Adrenal gland (tissue), 19 donors: ENCODE measurements at regions of chr9 and their contacts with region 1.

Region 1: GRCh38 chr9:130866474-130866965 is 30.1 kb downstream of the QRFP start:
- DNase-seq: peak; percentile 74 to 93 (median 82)
- H3K4me3 ChIP-seq: no peak overlapping the region
- H3K27ac ChIP-seq: no peak overlapping the region
- H3K4me1 ChIP-seq: peaks cover 12 to 22% of the 10 kb centered on the region in 2 donors
- H3K27me3 ChIP-seq: no peaks in the 10 kb centered on the region
- CTCF ChIP-seq: peak; percentile 80 to 95 (median 90)
- POLR2A ChIP-seq: no peak

Region 2: DNA sequence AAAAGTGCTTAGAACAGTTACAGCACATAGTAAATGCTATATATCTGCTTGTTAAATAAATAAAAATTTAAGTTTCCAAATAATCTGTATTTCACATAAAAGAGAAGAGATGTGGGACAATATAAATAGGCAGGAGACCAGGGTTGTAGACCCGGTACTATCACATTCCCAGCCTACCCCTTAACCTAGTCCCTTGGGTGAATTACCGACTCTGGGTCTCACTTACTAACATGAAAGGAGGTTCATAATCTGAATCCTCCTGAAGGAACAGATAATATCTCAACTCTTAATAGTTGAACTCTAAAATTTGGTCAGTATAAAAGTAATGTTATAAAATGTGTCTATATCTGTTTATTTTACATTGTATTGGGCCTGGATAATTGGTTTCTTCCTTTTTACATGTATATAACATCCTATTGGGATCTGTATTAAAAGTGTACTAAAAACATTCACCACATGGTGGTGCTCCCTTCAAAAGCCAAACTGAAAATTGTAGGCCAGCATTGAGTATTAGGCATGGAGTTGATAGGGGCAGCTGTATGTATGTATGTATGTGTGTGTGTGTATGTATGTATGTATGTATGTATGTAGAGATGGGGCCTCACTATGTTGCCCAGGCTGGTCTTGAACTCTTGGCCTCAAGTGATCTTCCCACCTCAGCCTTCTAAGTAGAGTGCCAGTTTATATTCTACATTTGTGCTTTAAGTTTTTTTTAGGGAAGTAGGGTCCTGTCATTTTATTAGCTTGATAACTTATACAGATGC is 95.7 kb before region 1 on chr9:
- intact Hi-C with region 1: loop called (anchors 5 kb)
- DNase-seq: no peak
- H3K4me3 ChIP-seq: no peak overlapping the region
- H3K27ac ChIP-seq: no peak overlapping the region
- H3K4me1 ChIP-seq: peaks cover 3 to 10% of the 10 kb centered on the region in 2 donors
- H3K27me3 ChIP-seq: no peaks in the 10 kb centered on the region
- CTCF ChIP-seq: peak; percentile 40 to 83 (median 69)
- POLR2A ChIP-seq: no peak

Region 3: DNA sequence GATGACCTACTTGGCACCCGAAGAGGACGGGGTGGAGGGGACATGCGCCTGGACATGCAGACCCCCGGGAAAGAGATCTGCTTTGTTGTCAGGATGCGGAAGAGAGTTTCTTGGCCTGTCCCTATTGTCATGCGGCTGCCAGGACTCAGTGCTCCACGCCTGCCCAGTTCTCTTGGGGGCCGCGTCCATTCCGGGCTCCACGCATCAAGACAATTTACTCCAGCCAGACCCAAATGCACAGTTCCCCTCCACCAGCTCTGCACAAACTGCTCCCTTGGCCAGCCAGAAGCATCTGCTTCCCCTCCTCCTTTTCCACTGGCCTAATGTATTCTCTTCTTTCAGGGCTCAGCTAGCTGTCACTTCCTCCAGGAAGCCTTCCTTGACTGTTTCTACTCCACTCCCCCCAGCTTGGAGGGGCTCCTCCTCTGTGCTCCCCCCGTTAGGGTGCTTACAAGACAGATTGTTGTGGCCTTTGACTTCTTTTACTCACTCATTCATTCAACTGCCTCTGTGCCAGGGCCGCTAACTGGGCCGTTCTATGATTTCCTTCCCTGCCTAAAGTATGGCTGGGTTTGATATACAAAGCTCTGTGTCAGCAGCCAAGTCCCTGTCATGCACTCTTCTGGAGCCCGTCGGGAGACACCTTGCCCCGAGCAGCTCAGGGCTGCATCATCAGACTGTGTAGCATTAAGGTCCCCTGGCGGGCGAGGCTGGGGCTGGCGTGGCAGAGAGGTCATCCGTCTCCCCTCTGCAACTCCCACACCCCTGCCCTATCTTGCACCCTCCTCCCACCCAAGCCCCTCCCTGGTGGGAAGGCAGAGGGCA is 65.9 kb after region 1 on chr9:
- intact Hi-C with region 1: loop called in 1 of 2 experiments (anchors 5 kb)
- DNase-seq: peak in 2 of 7 donors; percentile 49 to 58
- H3K4me3 ChIP-seq: no peak overlapping the region
- H3K27ac ChIP-seq: peak overlapping the region in 1 of 5 donors; percentile 49
- H3K4me1 ChIP-seq: peaks cover 36 to 42% of the 10 kb centered on the region in 2 donors
- H3K27me3 ChIP-seq: peaks cover 4% of the 10 kb centered on the region
- CTCF ChIP-seq: peak in 1 of 6 experiments; percentile 11
- POLR2A ChIP-seq: no peak

Region 4: GRCh38 chr9:130940693-130941576 is 74.4 kb after region 1 on chr9:
- intact Hi-C with region 1: loop called (anchors 5 kb)
- DNase-seq: peak; percentile 52 to 83 (median 76)
- H3K4me3 ChIP-seq: no peak overlapping the region
- H3K27ac ChIP-seq: no peak overlapping the region
- H3K4me1 ChIP-seq: peaks cover 20 to 27% of the 10 kb centered on the region in 2 donors
- H3K27me3 ChIP-seq: peaks cover 39% of the 10 kb centered on the region
- CTCF ChIP-seq: peak; percentile 66 to 88 (median 82)
- POLR2A ChIP-seq: no peak

Region 5: DNA sequence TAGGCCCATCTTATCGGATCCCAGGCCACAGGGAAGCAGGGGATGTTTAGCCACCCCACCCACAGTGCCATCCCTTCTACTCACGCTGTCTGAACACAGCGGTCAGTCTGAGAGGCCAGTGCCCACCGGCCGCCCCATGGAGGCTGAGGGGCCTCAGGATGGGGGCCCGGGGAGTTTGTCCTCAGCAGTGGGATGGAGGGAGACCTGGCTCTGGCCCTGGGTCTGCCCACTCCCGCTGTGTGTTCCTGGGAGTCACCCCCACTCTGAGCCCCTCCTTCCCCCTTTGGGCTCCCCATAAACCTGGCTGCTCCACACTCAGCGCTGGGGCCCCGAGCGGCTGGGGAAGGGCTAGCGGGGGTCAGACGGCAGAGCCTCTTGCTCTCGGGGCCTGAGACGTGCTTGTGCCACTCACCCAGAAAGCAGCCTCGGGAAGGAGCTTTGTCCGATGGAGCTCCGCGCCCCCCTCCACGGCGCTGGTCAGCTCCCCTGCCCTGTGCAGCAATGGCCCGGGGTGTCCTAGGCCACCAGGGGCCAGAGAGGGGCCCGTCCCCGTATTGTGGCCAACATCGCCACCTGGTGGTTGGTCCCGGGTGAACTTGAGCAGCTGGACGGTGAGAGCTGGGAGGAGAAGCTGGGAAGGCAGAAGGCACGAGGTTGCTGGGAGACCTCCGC is 131.5 kb after region 1 on chr9:
- intact Hi-C with region 1: loop called in 1 of 2 experiments (anchors 5 kb)
- DNase-seq: peak; percentile 66 to 84 (median 78)
- H3K4me3 ChIP-seq: no peak overlapping the region
- H3K27ac ChIP-seq: no peak overlapping the region
- H3K4me1 ChIP-seq: peaks cover 5 to 10% of the 10 kb centered on the region in 2 donors
- H3K27me3 ChIP-seq: no peaks in the 10 kb centered on the region
- CTCF ChIP-seq: peak; percentile 72 to 85 (median 77)
- POLR2A ChIP-seq: no peak

Region 6: GRCh38 chr9:131046581-131047202 is 180.2 kb after region 1 on chr9:
- intact Hi-C with region 1: loop called in 1 of 2 experiments (anchors 5 kb)
- DNase-seq: peak; percentile 61 to 79 (median 70)
- H3K4me3 ChIP-seq: no peak overlapping the region
- H3K27ac ChIP-seq: no peak overlapping the region
- H3K4me1 ChIP-seq: no peaks in the 10 kb centered on the region
- H3K27me3 ChIP-seq: no peaks in the 10 kb centered on the region
- CTCF ChIP-seq: peak; percentile 79 to 92 (median 86)
- POLR2A ChIP-seq: no peak